ENCODE measurements at regions of chr6 and their contacts with region 1.

Region 1: DNA sequence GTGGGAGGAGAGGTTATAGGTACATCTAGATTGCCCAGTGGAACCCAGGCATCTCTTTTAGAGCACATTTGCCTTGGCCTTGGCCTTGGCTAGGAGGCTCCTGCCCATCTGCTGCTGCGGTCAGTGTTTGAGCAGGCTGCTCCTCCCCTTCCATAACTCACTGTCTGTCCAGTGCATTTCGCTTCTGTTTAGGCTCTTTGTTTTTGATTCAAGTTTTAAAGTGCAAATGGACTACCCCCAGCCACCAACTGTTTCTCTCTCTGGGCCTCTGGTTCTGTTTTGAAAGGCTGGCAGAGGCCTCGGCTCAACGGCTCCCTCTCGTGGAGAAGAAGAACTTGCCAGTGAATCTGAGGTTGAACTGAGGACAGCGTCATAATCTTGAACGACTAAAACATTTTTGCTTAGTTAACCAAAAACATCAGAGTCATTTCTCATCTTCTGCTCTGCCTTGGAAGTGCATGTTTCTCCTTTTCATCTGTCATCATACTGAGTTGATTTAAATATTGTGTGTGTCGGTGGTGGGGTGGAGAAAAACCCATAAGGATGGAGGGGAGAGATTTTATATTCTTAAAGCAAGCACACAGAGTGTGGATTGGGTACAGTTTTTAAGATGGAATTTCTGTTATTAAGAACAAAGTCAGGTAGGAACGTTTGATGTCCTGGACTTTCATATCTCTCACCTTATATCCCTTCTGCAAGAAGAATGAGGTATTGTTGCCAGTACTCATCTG is 171.4 kb downstream of the DTNBP1 start:
- DNase-seq: peak; percentile 82
- H3K4me3 ChIP-seq: no peak overlapping the region
- H3K27ac ChIP-seq: no peak overlapping the region
- H3K4me1 ChIP-seq: peaks cover 39% of the 10 kb centered on the region
- H3K27me3 ChIP-seq: no peaks in the 10 kb centered on the region
- CTCF ChIP-seq: peak; percentile 96

Region 2: GRCh38 chr6:15254070-15254841 is 237.2 kb before region 1 on chr6:
- CTCF ChIA-PET with region 1: no interaction called
- POLR2A ChIA-PET with region 1: no interaction called
- intact Hi-C with region 1: loop called (anchors 5 kb)
- DNase-seq: peak; percentile 96
- H3K4me3 ChIP-seq: no peak overlapping the region
- H3K27ac ChIP-seq: peak overlapping the region; percentile 5
- H3K4me1 ChIP-seq: peaks cover 94% of the 10 kb centered on the region
- H3K27me3 ChIP-seq: no peaks in the 10 kb centered on the region
- CTCF ChIP-seq: peak; percentile 56

Region 3: DNA sequence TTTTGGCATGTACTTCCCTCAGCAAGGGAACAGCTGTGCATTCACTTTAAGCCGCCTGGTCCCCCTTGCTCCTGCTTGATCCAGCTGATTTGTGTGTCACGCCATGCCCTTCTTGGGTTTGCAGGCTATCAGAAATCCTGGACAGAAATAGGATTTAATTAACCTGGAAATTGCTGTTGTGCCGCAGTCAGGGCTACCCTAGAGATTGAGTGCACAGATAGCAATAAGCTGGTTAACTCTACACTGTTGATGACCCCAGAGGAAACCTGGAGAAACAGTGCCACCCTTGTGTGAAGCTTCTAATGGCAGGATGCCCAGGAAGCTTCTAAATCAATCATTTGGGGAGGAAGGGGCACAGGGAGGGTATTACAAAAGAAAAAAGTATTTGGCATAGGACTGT is 46.5 kb before region 1 on chr6:
- CTCF ChIA-PET with region 1: no interaction called
- POLR2A ChIA-PET with region 1: no interaction called
- intact Hi-C with region 1: loop called (anchors 5 kb)
- DNase-seq: peak; percentile 81
- H3K4me3 ChIP-seq: no peak overlapping the region
- H3K27ac ChIP-seq: no peak overlapping the region
- H3K4me1 ChIP-seq: peaks cover 73% of the 10 kb centered on the region
- H3K27me3 ChIP-seq: no peaks in the 10 kb centered on the region
- CTCF ChIP-seq: peak; percentile 45